ENCODE measurements at regions of chr14 and their contacts with region 1.

Region 1: GRCh38 chr14:80475074-80475473 is 263.8 kb upstream of the DIO2 start:
- DNase-seq: no peak
- ATAC-seq: no peak
- H3K4me3 ChIP-seq: no peak overlapping the region
- H3K27ac ChIP-seq: no peak overlapping the region
- H3K4me1 ChIP-seq: peaks cover 0 to 15% (median 0%) of the 10 kb centered on the region in 9 donors
- H3K27me3 ChIP-seq: no peaks in the 10 kb centered on the region
- CTCF ChIP-seq: no peak

Region 2: DNA sequence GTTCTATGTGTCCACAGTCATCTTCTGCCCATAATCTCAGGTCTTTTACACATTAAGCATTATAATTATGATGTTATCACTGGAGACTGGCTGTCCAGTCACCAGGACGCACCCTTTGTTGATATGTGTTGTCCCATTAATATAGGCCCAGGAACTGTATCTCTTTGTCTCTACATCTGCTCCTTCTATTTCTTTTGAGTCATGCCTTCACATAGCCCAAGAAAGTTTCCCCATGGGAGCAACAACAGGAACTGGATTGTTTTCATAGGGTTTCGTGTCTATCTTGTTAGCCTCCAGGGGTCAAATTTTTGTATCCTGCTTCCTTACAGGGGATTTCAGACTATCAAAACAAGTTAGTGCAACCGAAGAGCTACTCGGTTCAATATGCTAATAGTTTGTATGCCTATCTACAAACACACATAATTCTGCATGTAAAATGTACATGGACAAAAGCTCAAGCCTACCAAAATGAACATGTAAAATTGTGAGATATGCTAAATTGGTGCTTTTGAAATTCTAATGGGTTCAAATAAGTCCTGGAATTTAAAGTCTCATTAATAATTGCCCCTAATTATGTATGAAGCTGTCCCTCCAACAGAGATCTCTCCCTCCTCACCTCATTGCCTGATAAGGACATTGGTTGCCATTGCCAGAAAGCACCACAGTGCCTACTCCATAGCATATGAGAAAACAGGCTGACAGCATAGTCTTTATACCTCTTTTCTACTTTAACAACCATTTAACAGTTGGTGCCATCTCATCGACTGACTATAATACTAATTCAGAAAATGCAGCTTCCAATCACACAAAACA is 163.9 kb before region 1 on chr14:
- intact Hi-C with region 1: loop called in 1 of 10 experiments (anchors 10 kb)
- DNase-seq: peak in 1 of 2 donors; percentile 22
- ATAC-seq: peak in 6 of 8 donors; percentile 52 to 77 (median 72)
- H3K4me3 ChIP-seq: no peak overlapping the region
- H3K27ac ChIP-seq: peak overlapping the region in 5 of 10 donors; percentile 17 to 71 (median 34)
- H3K4me1 ChIP-seq: peaks cover 0 to 21% (median 5%) of the 10 kb centered on the region in 9 donors
- H3K27me3 ChIP-seq: no peaks in the 10 kb centered on the region
- CTCF ChIP-seq: no peak

Region 3: DNA sequence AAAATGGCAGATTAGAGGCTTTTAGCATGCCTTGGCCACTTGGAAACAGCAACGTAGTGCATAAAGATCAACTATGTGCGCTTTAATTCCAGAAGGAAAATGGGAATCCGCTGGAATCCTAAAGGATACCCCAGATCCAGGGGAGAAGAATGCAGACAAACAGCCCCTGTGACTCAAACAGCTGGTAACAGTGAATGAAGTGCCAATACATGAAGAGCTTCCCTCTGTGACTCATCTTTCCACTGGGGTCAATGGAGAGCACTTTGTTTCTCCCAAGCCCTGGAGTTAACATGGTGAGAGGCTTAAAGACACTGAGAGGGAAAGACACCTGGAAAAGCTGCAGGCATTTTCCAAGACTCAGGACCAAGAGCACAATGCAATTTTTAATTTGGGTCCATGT is 203.4 kb after region 1 on chr14:
- intact Hi-C with region 1: no loop called
- DNase-seq: no peak
- ATAC-seq: no peak
- H3K4me3 ChIP-seq: no peak overlapping the region
- H3K27ac ChIP-seq: no peak overlapping the region
- H3K4me1 ChIP-seq: no peaks in the 10 kb centered on the region
- H3K27me3 ChIP-seq: no peaks in the 10 kb centered on the region
- CTCF ChIP-seq: no peak